ENCODE measurements at regions of chr16 and their contacts with region 1.

Region 1: GRCh38 chr16:714558-715476 is at the start of gene METRN:
- DNase-seq: peak; percentile 98
- H3K4me3 Mint-ChIP-seq: peak within 1 kb of the TSS; percentile 78
- H3K27ac Mint-ChIP-seq: peak within 1 kb of the TSS; percentile 83
- H3K4me1 Mint-ChIP-seq: peaks cover 22% of the 10 kb centered on the region
- H3K27me3 Mint-ChIP-seq: peaks cover 19% of the 10 kb centered on the region
- CTCF ChIP-seq: no peak
- total RNA-seq, gene METRN: 51.7 and 61.5 TPM in 2 replicates

Region 2: GRCh38 chr16:726438-727290 is 11.8 kb after region 1 on chr16 and contains the starts of genes CCDC78 and HAGHL:
- CTCF ChIA-PET with region 1: interaction called, 10 read pairs
- intact Hi-C with region 1: no loop called
- DNase-seq: peak; percentile 65
- H3K4me3 Mint-ChIP-seq: peak within 1 kb of the TSS; percentile 74
- H3K27ac Mint-ChIP-seq: no peak within 1 kb of the TSS
- H3K4me1 Mint-ChIP-seq: no peaks in the 10 kb centered on the region
- H3K27me3 Mint-ChIP-seq: no peaks in the 10 kb centered on the region
- CTCF ChIP-seq: no peak
- total RNA-seq, gene CCDC78: 10.0 and 12.5 TPM in 2 replicates
- total RNA-seq, gene HAGHL: 11.7 and 12.8 TPM in 2 replicates

Region 3: DNA sequence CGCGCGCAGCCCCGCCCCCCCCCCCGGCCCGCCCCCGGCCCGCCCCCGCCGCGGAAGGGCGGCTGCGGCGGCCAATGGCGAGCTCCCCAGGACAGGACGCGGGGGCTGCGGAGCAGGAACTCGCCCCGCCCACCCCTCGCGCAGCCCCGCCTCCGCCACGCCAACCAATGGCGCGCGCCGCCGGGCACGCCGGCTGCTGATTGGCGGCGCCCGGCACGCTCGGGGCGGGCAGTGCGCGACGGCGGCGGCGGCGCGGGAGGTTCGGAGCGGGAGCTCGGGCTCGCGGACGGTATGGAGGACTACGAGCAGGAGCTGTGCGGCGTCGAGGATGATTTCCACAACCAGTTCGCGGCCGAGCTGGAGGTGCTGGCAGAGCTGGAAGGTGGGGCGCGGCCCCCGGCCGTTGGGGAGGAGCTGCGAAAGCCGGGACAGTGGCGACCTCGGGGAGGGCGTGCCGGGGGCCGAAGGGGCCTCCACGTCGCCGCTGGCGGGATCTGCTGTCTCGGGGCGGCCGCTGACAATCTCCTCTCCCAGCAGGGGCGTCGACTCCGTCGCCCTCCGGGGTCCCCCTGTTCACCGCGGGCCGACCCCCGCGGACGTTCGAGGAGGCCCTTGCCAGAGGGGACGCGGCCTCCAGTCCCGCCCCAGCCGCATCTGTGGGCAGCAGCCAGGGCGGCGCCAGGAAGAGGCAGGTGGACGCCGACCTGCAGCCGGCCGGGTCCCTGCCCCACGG is 73.7 kb after region 1 on chr16 and contains the start of gene CHTF18:
- CTCF ChIA-PET with region 1: interaction called, 9 read pairs
- intact Hi-C with region 1: loop called (anchors 5 kb)
- DNase-seq: peak; percentile 97
- H3K4me3 Mint-ChIP-seq: peak within 1 kb of the TSS; percentile 98
- H3K27ac Mint-ChIP-seq: peak within 1 kb of the TSS; percentile 42
- H3K4me1 Mint-ChIP-seq: no peaks in the 10 kb centered on the region
- H3K27me3 Mint-ChIP-seq: no peaks in the 10 kb centered on the region
- CTCF ChIP-seq: no peak
- total RNA-seq, gene CHTF18: 154 and 173 TPM in 2 replicates

Measured in Calu3 (cell line).